BJ (cell line): ENCODE measurements at regions of chr10 and their contacts with region 1.

Region 1: DNA sequence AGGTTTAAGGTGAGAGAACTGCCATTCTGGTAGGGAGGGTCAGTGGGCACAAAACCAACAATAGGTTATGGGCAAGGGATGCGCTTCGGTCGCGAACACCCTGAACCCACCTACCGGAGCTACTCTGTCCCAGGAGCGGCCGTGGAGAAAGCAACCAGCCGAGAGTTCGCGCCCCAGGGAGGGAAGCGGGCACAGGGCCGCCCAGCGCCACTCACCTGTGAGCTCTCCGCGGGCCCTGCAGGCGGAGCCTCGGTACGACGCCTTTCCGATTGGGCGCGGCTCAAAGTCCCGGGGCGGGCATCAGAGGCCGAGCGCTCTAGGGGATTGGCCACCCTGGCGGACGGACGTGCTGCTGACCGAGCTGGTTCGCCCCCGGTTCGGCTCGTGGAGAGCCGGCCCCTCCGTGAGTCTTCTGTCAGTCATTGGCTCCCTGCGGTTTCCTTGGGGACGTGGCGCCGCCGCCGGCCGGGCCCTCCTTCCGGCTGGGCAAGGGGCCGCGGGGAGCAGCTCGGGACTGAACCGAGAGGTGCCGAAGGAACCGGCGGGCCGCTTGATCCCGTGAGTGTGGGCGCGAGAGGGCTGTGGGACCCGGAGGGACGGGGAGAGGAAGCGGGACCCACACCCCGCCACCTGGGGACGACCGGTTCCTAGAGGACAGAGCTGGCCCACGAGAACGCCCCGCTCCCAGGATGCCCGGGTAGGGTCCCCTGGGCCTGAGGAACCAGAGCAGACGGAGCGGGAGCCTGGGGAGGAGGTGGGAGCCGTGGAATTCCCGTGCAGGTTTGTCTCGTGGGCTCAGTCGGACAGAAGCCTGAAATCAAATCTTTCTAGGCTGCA is at the start of gene ENTPD7:
- DNase-seq: peak; percentile 79
- H3K4me3 ChIP-seq: peak within 1 kb of the TSS; percentile 99
- H3K27me3 ChIP-seq: no peaks in the 10 kb centered on the region
- CTCF ChIP-seq: peak; percentile 37; the same call in 1 of the 2 replicates
- polyA plus RNA-seq, gene ENTPD7: 13.6 and 16.4 TPM in 2 replicates

Region 2: DNA sequence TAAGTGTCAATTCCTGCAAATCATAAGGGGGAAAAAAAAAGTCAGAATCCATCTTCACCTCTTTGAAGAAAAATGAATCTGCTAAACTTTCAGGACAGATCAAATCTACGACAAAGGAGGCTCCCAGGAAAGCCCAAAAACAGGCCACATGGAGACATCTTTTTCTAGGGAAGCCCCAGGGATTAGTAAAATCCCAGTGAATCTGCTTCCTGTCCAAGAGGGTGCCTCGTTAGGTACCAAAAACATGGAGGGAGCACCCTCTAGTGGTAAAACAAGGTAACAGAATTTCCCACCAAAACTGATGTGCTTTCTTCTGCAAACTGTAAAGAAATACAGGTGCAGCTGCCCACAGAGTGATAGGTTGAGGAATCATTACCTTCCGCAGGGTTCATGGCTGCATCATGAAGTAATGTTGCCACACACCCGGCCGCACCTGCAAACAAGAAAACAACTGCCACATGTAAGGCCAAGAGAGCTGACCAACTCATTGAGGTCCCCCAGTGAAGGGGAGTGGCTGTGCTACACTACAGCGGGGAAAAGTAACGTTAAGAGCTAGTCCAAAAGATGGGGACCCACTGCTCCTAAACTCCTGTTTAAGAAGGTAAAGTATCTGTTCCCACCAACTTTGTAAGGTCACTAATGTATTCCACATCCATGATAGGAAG is 47.0 kb before region 1 on chr10:
- CTCF ChIA-PET with region 1: no interaction called
- POLR2A ChIA-PET with region 1: no interaction called
- DNase-seq: no peak
- H3K4me3 ChIP-seq: no peak overlapping the region
- H3K27me3 ChIP-seq: no peaks in the 10 kb centered on the region
- CTCF ChIP-seq: peak; percentile 77

Region 3: GRCh38 chr10:99630439-99630838 is 28.8 kb before region 1 on chr10:
- CTCF ChIA-PET with region 1: interaction called, 10 read pairs
- POLR2A ChIA-PET with region 1: no interaction called
- DNase-seq: no peak
- H3K4me3 ChIP-seq: no peak overlapping the region
- H3K27me3 ChIP-seq: peaks cover 2% of the 10 kb centered on the region; the same call in 1 of the 2 replicates
- CTCF ChIP-seq: peak; percentile 63